H1 (cell line): ENCODE measurements at regions of chr15 and their contacts with region 1.

Region 1: DNA sequence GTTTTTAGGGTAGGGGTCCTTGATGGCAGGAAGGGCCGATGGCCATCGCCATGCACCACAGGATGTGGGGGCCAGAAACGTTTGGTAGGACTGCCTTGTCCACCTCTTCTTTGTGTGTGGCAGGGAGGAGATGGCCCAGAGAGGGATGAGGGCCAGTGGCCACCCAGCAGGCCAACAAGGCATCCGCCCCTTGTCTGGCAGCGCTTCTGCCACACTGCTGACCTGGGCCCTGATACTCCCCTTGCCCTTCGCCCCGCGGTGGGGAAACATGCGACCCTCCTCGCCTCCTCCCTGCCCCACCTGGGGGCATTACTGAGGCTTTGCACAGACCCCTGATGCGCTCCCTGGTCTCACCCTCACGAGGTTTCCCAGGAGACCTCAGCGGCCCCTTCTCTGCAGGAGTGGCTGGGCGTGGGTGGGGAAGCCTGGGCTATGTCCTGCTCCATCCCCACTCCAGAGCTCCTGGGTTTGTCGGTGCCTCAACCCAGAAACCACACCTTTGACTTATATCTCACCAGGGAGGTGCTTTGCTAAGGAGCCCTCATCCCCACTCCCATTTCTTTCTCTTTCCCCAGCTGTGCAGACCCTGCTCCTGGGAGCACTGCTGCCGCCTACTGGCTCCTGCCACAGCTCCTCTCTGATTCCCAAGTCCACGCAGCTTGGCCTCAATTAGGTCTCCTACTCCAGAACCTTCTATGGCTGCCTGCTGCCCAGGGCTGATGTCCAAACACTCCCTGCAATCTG is 38.7 kb downstream of the FEM1B start:
- DNase-seq: peak in 1 of 2 experiments; percentile 72
- H3K4me3 ChIP-seq: peak overlapping the region in 1 of 4 experiments; percentile 25; a peak in 1 of 8 replicates
- H3K27ac ChIP-seq: no peak overlapping the region
- H3K4me1 ChIP-seq: peaks cover 0 to 20% (median 15%) of the 10 kb centered on the region in 4 experiments; a peak in 6 of 7 replicates
- H3K27me3 ChIP-seq: no peaks in the 10 kb centered on the region
- CTCF ChIP-seq: peak; percentile 75 to 82 (median 77)
- EP300 ChIP-seq: no peak
- POLR2A ChIP-seq: no peak
- RAD21 ChIP-seq: peak; percentile 51 to 68

Region 2: DNA sequence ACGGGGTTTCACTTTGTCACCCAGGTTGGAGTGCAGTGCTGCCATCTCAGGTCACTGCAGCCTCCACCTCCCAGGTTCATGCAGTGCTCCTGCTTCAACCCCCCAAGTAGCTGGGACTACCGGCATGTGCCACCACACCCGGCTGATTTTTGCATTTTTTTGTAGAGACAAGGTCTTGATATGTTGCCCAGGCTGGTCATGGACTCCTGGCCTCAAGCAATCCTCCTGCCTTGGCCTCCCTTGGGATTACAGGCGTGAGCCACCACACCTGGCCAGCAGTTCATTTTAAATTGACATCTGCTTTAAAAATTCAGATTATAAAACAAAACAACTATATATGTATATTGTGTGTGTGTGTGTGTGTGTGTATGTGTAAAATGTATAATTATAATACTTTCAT is 149.4 kb before region 1 on chr15:
- CTCF ChIA-PET with region 1: no interaction called
- POLR2A ChIA-PET with region 1: no interaction called
- DNase-seq: no peak
- H3K4me3 ChIP-seq: no peak overlapping the region
- H3K27ac ChIP-seq: no peak overlapping the region
- H3K4me1 ChIP-seq: no peaks in the 10 kb centered on the region
- H3K27me3 ChIP-seq: no peaks in the 10 kb centered on the region
- CTCF ChIP-seq: no peak
- EP300 ChIP-seq: no peak
- POLR2A ChIP-seq: no peak
- RAD21 ChIP-seq: no peak

Region 3: DNA sequence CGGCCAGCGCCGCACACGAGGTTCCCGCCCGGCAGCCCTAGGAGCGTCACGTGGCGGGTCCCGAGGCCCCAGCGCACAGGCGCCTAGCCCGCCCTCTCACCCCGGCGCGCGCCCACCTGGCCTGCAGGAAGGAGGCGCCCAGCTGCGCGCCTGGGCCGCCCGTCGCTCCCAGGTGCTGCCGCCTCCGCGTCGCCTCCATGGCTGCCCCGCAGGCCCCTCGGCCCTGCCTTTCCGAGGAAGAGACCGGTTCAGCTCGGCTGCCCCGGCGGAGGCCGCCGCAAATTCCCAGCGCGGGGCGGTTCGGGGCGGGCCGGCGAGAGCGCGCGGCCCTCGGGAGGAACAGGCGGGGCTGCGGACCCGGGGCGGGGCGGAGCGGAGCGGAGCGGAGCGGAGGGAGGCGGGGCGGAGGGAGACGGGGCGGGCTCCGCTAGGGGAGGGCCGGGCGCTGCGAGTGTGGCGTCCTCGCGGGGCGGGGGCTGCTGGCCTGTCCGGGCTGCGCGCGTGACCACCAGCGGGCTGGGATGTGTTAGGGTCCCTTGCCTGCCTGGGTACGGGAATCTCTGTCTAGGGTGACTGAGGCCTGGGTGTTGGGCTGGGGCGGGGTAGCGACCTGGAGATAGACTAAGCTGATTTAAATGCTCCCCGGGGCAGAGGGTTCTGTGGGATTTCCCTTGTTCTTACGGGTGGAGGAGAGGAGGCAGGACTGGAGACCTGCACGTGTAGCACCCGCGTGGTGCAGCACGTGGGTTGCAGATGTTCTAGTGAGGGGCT is 86.7 kb before region 1 on chr15 and contains the start of gene CLN6:
- CTCF ChIA-PET with region 1: interaction called, 13 read pairs
- POLR2A ChIA-PET with region 1: interaction called, 3 read pairs
- DNase-seq: peak in 1 of 2 experiments; percentile 88
- H3K4me3 ChIP-seq: peak within 1 kb of the TSS; percentile 51 to 92 (median 78)
- H3K27ac ChIP-seq: peak within 1 kb of the TSS; percentile 90
- H3K4me1 ChIP-seq: peaks cover 7 to 17% (median 11%) of the 10 kb centered on the region in 4 experiments
- H3K27me3 ChIP-seq: peaks cover 0 to 2% (median 0%) of the 10 kb centered on the region in 4 experiments; a peak in 1 of 7 replicates
- CTCF ChIP-seq: no peak
- EP300 ChIP-seq: no peak; a peak in 1 of 3 replicates
- POLR2A ChIP-seq: peak; percentile 40 to 53; a peak in 2 of 3 replicates
- RAD21 ChIP-seq: no peak
- total RNA-seq, gene CLN6: 60.0 and 62.3 TPM in 2 replicates

Region 4: DNA sequence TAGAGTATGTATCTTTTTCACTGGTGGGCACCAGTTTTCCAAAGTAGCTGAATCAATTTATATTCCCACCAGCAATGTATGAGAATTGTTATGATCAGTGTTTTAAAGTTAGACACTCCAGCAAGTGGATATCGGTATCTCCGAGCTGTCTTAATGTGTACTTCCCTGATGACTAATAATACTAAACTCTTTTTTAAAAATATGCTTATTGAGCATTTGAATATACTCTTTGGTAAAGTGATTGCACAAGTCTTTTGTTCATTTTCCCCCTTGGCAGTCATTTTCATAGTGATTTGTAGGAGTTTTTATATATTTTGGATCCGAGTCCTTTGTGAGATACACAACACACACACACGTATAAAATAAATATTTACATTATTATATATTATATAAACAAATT is 51.2 kb before region 1 on chr15:
- CTCF ChIA-PET with region 1: no interaction called
- POLR2A ChIA-PET with region 1: no interaction called
- DNase-seq: no peak
- H3K4me3 ChIP-seq: peak overlapping the region in 1 of 4 experiments; percentile 39; a peak in 2 of 8 replicates
- H3K27ac ChIP-seq: no peak overlapping the region
- H3K4me1 ChIP-seq: peaks cover 3 to 22% (median 11%) of the 10 kb centered on the region in 4 experiments; a peak in 3 of 7 replicates
- H3K27me3 ChIP-seq: no peaks in the 10 kb centered on the region
- CTCF ChIP-seq: no peak
- EP300 ChIP-seq: no peak
- POLR2A ChIP-seq: no peak
- RAD21 ChIP-seq: no peak

Region 5: GRCh38 chr15:68277603-68278344 is 38.5 kb before region 1 on chr15 and contains the start of gene FEM1B:
- CTCF ChIA-PET with region 1: interaction called, 4 read pairs
- POLR2A ChIA-PET with region 1: interaction called, 11 read pairs
- DNase-seq: peak; percentile 75 to 92
- H3K4me3 ChIP-seq: peak within 1 kb of the TSS; percentile 78 to 99 (median 89)
- H3K27ac ChIP-seq: peak within 1 kb of the TSS; percentile 94
- H3K4me1 ChIP-seq: peaks cover 5 to 18% (median 14%) of the 10 kb centered on the region in 4 experiments; a peak in 6 of 7 replicates
- H3K27me3 ChIP-seq: no peaks in the 10 kb centered on the region
- CTCF ChIP-seq: peak in 1 of 3 experiments; percentile 8; a peak in 1 of 4 replicates
- EP300 ChIP-seq: peak in 1 of 2 experiments; percentile 68; a peak in 1 of 3 replicates
- POLR2A ChIP-seq: peak; percentile 54 to 88; a peak in 2 of 3 replicates
- RAD21 ChIP-seq: no peak
- total RNA-seq, gene FEM1B: 72.9 and 83.8 TPM in 2 replicates

Region 6: DNA sequence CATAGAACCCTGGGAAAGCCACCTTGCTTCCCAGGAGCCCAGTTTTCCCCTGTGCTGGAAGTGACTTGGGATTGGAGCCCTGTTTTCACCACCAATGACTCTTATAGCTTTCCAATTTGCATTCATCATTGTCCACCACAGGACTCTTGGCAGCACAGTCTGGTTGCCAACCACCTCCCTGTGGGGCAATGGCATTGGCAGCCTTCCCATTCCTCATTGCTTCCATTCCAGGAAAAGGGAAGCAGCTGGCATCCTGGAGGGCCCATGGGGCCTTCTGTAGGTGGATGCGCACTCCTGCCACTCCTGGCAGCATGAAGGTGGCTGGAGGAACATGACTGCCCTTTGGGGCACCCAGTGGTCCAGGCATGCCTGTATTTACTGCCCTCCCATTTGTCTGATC is 19.0 kb after region 1 on chr15:
- CTCF ChIA-PET with region 1: interaction called, 13 read pairs
- POLR2A ChIA-PET with region 1: interaction called, 3 read pairs
- DNase-seq: no peak
- H3K4me3 ChIP-seq: no peak overlapping the region
- H3K27ac ChIP-seq: no peak overlapping the region
- H3K4me1 ChIP-seq: peaks cover 2 to 7% (median 6%) of the 10 kb centered on the region in 4 experiments; a peak in 4 of 7 replicates
- H3K27me3 ChIP-seq: no peaks in the 10 kb centered on the region
- CTCF ChIP-seq: no peak
- EP300 ChIP-seq: no peak
- POLR2A ChIP-seq: no peak
- RAD21 ChIP-seq: no peak

Region 7: GRCh38 chr15:68365140-68365745 is 49.0 kb after region 1 on chr15:
- CTCF ChIA-PET with region 1: interaction called, 12 read pairs
- POLR2A ChIA-PET with region 1: no interaction called
- DNase-seq: no peak
- H3K4me3 ChIP-seq: no peak overlapping the region
- H3K27ac ChIP-seq: no peak overlapping the region
- H3K4me1 ChIP-seq: no peaks in the 10 kb centered on the region; a peak in 1 of 7 replicates
- H3K27me3 ChIP-seq: no peaks in the 10 kb centered on the region
- CTCF ChIP-seq: no peak
- EP300 ChIP-seq: no peak
- POLR2A ChIP-seq: no peak
- RAD21 ChIP-seq: no peak

Region 8: GRCh38 chr15:68383161-68384074 is 67.2 kb after region 1 on chr15:
- CTCF ChIA-PET with region 1: interaction called, 15 read pairs
- POLR2A ChIA-PET with region 1: no interaction called
- DNase-seq: peak in 1 of 2 experiments; percentile 55
- H3K4me3 ChIP-seq: no peak overlapping the region
- H3K27ac ChIP-seq: no peak overlapping the region
- H3K4me1 ChIP-seq: no peaks in the 10 kb centered on the region
- H3K27me3 ChIP-seq: no peaks in the 10 kb centered on the region
- CTCF ChIP-seq: peak in 2 of 3 experiments; percentile 67 to 79; a peak in 3 of 4 replicates
- EP300 ChIP-seq: no peak
- POLR2A ChIP-seq: no peak
- RAD21 ChIP-seq: peak; percentile 61 to 72